Activated naive CD8-positive, alpha-beta T cell treated with anti-CD3 and anti-CD28 coated beads, Interleukin-2, amount 10 ng/mL, durations not matched to agents 7 days and 5 days (primary cell): ENCODE measurements at regions of chr22 and their contacts with region 1.

Region 1: GRCh38 chr22:37608477-37609239 is at the start of gene GGA1:
- DNase-seq: peak; percentile 97
- ATAC-seq: peak; percentile 81
- H3K4me3 Mint-ChIP-seq: peak within 1 kb of the TSS; percentile 95
- H3K27ac Mint-ChIP-seq: peak within 1 kb of the TSS; percentile 98
- H3K4me1 Mint-ChIP-seq: peaks cover 50% of the 10 kb centered on the region
- H3K27me3 Mint-ChIP-seq: peaks cover 7% of the 10 kb centered on the region
- total RNA-seq, gene GGA1: 75.3 to 79.5 TPM

Region 2: DNA sequence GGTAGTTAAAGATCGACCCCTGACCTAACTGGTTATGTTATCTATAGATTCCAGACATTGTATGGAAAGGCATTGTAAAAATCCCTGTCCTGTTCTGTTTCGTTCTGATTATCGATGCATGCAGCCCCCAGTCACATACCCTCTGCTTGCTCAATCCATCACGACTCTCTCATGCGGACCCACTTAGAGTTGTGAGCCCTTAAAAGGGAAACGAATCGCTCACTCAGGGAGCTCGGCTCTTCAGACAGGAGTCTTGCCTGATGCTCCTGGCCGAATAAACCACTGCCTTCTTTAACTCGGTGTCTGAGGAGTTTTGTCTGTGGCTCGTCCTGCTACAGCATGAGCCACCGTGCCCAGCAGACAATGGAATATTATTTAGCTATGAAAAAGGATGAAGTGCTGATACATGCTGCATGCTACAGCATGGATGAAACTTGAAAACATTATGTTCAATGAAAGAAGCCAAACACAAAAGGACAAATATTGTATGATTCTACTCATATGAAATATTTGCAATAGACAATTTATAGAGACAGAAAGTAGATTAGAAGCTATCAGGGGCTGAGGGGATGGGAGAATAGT is 16.7 kb before region 1 on chr22:
- POLR2A ChIA-PET with region 1: interaction called, 18 read pairs
- DNase-seq: no peak
- ATAC-seq: peak; percentile 9
- H3K4me3 Mint-ChIP-seq: peak overlapping the region; percentile 79
- H3K27ac Mint-ChIP-seq: peak overlapping the region; percentile 84
- H3K4me1 Mint-ChIP-seq: peaks cover 11% of the 10 kb centered on the region
- H3K27me3 Mint-ChIP-seq: peaks cover 10% of the 10 kb centered on the region

Region 3: GRCh38 chr22:37623075-37624016 is 14.7 kb after region 1 on chr22:
- POLR2A ChIA-PET with region 1: interaction called, 18 read pairs
- DNase-seq: peak; percentile 82
- ATAC-seq: peak; percentile 59
- H3K4me3 Mint-ChIP-seq: no peak overlapping the region
- H3K27ac Mint-ChIP-seq: peak overlapping the region; percentile 94
- H3K4me1 Mint-ChIP-seq: peaks cover 26% of the 10 kb centered on the region
- H3K27me3 Mint-ChIP-seq: no peaks in the 10 kb centered on the region

Region 4: GRCh38 chr22:37633625-37634416 is 25.2 kb after region 1 on chr22:
- POLR2A ChIA-PET with region 1: interaction called, 51 read pairs
- DNase-seq: peak; percentile 79
- ATAC-seq: peak; percentile 62
- H3K4me3 Mint-ChIP-seq: peak overlapping the region; percentile 82
- H3K27ac Mint-ChIP-seq: peak overlapping the region; percentile 99
- H3K4me1 Mint-ChIP-seq: peaks cover 67% of the 10 kb centered on the region
- H3K27me3 Mint-ChIP-seq: no peaks in the 10 kb centered on the region

Region 5: DNA sequence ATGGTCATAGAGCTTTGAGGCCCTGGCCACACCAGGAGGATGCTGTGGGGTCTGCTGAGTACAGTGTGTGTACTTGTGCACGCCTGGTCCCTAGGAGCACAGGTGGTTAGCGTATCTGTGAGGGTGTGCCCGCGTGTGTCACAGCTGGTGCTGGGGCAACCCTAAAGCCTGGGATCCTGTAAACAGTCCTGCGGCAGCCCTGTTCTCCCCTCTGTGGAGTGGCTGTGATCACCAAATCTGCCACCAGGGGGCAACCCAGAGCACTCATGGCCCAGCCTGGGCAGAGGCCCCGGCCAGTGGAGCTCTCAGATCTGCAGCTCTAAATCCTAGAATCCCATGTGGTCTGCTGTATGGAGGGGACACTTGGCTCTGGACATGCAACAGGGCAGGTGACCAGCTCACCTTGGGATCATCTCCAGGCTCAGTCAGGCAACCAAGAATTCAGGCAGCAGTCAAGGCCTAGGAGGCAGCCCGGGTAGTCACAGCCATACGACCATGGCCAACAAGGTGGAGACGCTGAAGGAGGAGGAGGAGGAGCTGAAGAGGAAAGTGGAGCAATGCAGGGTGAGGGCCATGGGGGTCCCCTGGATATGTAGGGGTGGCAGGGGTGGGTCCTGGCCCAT is 34.7 kb after region 1 on chr22:
- POLR2A ChIA-PET with region 1: interaction called, 26 read pairs
- DNase-seq: peak; percentile 92
- ATAC-seq: peak; percentile 58
- H3K4me3 Mint-ChIP-seq: peak overlapping the region; percentile 66
- H3K27ac Mint-ChIP-seq: peak overlapping the region; percentile 79
- H3K4me1 Mint-ChIP-seq: peaks cover 27% of the 10 kb centered on the region
- H3K27me3 Mint-ChIP-seq: no peaks in the 10 kb centered on the region

Region 6: DNA sequence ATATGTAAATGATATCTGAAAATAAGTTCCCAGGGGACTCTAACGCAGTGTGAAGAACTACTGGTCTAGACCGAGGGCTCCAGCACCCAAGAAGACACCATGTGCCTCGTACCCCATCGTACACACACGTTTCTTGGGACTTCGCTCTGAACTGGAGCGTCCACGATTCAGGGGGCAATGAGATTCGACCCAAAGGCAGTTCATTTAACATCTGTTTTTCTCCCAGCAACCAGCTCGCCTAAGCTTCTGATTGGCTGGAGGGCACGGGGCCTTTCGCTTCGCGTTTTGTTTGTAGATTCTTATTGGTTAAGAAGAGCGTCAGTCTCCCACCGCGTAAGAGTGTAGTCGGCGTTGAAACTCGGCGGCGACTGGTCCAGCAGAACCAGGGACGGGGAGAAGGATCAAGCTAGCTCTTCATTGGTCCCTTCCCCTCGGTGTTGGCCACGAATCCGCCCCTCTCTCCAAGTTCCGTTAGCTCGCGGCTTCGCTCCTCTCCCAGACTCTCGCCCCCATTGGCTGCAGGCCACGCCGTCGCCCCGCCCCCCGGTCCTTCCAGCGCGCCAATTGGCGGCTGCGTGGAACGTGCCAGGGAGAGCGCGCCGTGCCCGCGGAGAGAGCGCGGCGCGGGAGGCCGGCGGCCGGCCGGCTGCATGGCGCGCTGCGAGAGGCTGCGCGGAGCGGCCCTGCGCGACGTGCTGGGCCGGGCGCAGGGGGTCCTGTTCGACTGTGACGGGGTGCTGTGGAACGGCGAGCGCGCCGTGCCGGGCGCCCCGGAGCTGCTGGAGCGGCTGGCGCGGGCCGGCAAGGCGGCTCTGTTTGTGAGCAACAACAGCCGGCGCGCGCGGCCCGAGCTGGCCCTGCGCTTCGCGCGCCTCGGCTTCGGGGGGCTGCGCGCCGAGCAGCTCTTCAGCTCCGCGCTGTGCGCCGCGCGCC is 49.7 kb after region 1 on chr22 and contains the start of gene PDXP:
- POLR2A ChIA-PET with region 1: interaction called, 20 read pairs
- DNase-seq: peak; percentile 99
- ATAC-seq: peak; percentile 98
- H3K4me3 Mint-ChIP-seq: peak within 1 kb of the TSS; percentile 95
- H3K27ac Mint-ChIP-seq: peak within 1 kb of the TSS; percentile 95
- H3K4me1 Mint-ChIP-seq: peaks cover 35% of the 10 kb centered on the region
- H3K27me3 Mint-ChIP-seq: no peaks in the 10 kb centered on the region
- total RNA-seq, gene PDXP: 16.4 to 16.6 TPM

Region 7: GRCh38 chr22:37676736-37677492 is 68.3 kb after region 1 on chr22:
- POLR2A ChIA-PET with region 1: interaction called, 28 read pairs
- DNase-seq: peak; percentile 90
- ATAC-seq: peak; percentile 65
- H3K4me3 Mint-ChIP-seq: peak overlapping the region; percentile 92
- H3K27ac Mint-ChIP-seq: peak overlapping the region; percentile 99
- H3K4me1 Mint-ChIP-seq: peaks cover 36% of the 10 kb centered on the region
- H3K27me3 Mint-ChIP-seq: no peaks in the 10 kb centered on the region